Endothelial cell of umbilical vein (primary cell): ENCODE measurements at regions of chr2 and their contacts with region 1.

Region 1: GRCh38 chr2:17646081-17646554 is 105.6 kb downstream of the VSNL1 start:
- DNase-seq: peak; percentile 77
- H3K4me3 ChIP-seq: no peak overlapping the region
- H3K27ac ChIP-seq: no peak overlapping the region
- H3K4me1 ChIP-seq: peaks cover 8% of the 10 kb centered on the region
- H3K27me3 ChIP-seq: no peaks in the 10 kb centered on the region
- CTCF ChIP-seq: peak; percentile 53 to 59
- POLR2A ChIP-seq: no peak

Region 2: GRCh38 chr2:17538844-17539554 is 107.1 kb before region 1 on chr2:
- CTCF ChIA-PET with region 1: interaction called, 3 read pairs
- POLR2A ChIA-PET with region 1: no interaction called
- dilution Hi-C with region 1: no loop called
- intact Hi-C with region 1: loop called (anchors 2 kb)
- DNase-seq: peak; percentile 31
- H3K4me3 ChIP-seq: peak overlapping the region; percentile 26 to 78 (median 68)
- H3K27ac ChIP-seq: no peak overlapping the region
- H3K4me1 ChIP-seq: peaks cover 23% of the 10 kb centered on the region
- H3K27me3 ChIP-seq: peaks cover 46 to 67% of the 10 kb centered on the region in 2 experiments
- CTCF ChIP-seq: no peak
- POLR2A ChIP-seq: no peak

Region 3: DNA sequence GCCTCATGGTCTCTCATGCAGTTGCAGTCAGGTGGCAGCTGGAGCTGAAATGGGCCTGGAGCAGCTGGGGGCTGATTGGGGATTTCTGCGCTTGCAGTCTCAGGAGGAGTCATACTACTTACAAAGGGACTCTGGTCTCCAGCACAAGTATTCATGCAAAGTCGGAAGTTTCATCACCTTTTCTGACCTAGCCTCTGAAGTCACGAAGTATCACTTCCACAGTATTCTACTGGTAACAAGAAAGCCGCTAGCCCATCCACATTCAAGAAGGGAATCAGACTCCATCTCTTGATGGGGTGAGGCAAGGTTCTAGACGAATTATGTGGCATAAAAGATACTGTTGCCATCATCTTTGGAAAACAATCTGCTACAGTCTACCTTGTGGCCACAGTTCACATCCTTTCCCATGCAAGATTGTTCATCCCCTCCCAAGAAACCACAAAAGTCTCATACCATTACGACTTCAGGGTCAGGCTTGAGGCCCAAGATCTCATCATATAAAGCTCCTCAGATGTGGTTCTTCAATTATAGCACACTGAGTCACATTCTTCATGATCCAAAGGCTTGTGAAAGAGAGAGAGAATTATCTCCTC is 12.2 kb after region 1 on chr2:
- CTCF ChIA-PET with region 1: interaction called, 38 read pairs
- POLR2A ChIA-PET with region 1: no interaction called
- dilution Hi-C with region 1: no loop called
- intact Hi-C with region 1: no loop called
- DNase-seq: no peak
- H3K4me3 ChIP-seq: no peak overlapping the region
- H3K27ac ChIP-seq: no peak overlapping the region
- H3K4me1 ChIP-seq: no peaks in the 10 kb centered on the region
- H3K27me3 ChIP-seq: no peaks in the 10 kb centered on the region
- CTCF ChIP-seq: no peak
- POLR2A ChIP-seq: no peak

Region 4: GRCh38 chr2:17672583-17673317 is 26.6 kb after region 1 on chr2:
- CTCF ChIA-PET with region 1: interaction called, 296 read pairs
- POLR2A ChIA-PET with region 1: no interaction called
- dilution Hi-C with region 1: no loop called
- intact Hi-C with region 1: loop called (anchors 1 kb)
- DNase-seq: no peak
- H3K4me3 ChIP-seq: no peak overlapping the region
- H3K27ac ChIP-seq: no peak overlapping the region
- H3K4me1 ChIP-seq: peaks cover 5% of the 10 kb centered on the region
- H3K27me3 ChIP-seq: no peaks in the 10 kb centered on the region
- CTCF ChIP-seq: no peak
- POLR2A ChIP-seq: no peak

Region 5: DNA sequence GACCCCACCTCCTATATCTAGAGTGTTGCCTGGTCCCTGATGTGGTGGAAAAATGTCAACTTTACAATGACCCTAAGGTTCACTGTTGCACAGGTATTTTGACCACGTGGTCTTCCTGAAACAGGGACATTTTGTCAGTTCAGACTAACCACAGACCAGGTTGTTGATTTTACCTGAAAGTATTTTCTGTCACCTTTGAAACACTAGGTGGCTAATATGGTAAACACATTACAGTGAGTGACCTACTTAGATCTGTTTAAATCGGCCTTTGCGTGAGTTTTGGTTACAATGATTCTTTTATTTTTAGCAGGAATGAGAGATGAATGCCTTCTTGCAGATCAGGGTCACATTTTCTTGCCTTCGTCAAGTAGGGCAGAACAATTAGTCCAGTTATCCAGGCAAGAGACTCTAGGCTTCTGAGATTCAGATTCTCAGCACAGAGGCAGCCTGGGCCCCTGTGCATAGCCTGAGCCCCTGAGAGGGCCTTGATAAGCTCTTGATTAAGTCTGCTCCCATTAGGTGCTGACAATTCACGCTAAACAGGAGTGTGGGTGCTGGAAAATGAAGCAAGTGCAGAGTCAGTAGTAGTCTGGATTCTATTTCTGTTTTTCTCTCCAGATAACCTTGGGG is 458.6 kb after region 1 on chr2:
- CTCF ChIA-PET with region 1: no interaction called
- POLR2A ChIA-PET with region 1: no interaction called
- dilution Hi-C with region 1: no loop called
- intact Hi-C with region 1: no loop called
- DNase-seq: no peak
- H3K4me3 ChIP-seq: no peak overlapping the region
- H3K27ac ChIP-seq: no peak overlapping the region
- H3K4me1 ChIP-seq: no peaks in the 10 kb centered on the region
- H3K27me3 ChIP-seq: no peaks in the 10 kb centered on the region
- CTCF ChIP-seq: no peak
- POLR2A ChIP-seq: no peak